ENCODE measurements at regions of chr16 and their contacts with region 1.

Region 1: DNA sequence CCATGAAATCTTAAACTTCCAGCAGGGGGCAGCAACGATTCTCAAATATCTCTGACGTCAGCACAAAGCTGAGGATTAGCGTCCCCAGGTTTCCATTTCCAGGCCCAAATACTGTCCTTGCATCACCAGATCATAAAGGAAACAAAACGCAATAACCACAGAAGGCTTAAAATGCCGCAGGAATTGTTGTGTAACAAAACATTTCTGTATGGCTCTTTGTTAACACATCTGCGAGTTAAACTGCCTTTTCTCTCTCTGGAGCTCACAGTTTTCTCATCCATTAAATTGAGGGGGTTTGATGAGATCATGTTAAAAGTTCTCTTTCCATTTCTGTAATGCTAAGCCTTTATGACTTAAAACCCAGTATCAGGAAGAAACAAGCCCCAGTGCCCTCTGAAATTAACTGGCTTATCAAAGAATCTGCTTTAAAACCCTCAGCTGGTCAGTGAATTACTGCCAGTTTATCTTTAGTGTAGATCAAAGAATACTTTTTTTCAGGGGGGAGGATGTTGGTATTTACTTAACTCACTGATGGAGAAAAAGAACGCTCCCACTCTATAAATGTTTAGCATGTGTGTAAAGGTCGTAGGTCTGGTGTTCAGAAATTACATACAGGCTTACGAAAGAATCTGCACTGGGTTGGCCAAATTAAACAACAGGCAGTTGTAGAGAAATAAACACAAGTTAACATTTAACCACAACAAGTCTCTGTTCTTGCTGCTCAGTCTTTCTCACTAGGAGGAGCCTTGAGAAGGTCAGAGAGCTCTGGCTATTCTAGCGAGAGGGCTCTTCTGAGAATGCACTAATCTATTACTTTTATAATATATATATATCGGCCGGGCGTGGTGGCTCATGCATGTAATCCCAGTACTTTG is 10.6 kb upstream of the TERF2 start:
- DNase-seq: peak; percentile 62
- ATAC-seq: peak; percentile 45 to 53

Region 2: GRCh38 chr16:69482410-69482991 is 86.1 kb after region 1 on chr16:
- intact Hi-C with region 1: loop called in 1 of 2 experiments (anchors 10 kb)
- DNase-seq: peak; percentile 87
- ATAC-seq: peak; percentile 80 to 85

Region 3: GRCh38 chr16:69651217-69651616 is 254.8 kb after region 1 on chr16:
- intact Hi-C with region 1: loop called in 1 of 2 experiments (anchors 10 kb)
- DNase-seq: no peak
- ATAC-seq: no peak

Region 4: DNA sequence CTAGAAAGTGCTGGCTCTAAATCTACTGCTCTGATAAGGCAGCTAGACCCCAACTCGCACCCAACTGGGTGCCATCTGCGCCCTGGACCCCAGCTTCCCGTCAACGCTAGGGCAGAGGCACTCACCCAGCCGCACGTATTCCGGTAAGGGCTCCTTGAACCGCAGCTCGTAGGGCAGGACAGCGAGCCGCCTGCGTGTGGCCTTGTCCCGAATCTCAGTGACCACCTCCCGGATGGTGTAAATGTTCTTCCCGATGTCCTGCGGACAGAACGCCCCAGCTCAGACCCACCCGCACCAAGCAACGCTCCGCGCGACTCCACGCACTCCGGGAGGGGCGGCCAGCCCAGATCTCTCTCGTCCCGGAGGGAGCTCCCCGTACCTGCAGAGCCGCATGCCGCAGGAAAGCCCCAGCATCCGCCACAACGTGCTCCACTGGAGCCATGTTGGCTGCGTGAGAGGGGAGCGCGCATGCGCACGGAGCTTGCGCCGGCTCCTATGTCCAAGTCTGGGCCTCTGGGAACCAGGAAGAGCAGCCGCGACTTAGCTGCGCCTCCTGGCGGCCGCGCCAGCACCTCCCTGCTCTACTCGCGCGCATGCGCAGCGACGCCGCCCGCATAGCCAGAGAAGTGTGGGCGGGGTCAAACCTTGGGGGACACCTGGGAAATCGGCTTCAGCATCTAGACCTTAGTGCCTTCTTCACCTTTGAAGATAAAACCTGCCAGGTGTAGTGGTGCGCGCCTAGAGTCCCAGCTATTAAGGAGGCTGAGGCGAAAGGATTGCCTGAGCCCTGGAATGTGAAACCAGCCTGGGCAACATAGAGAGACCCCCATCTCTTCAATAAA is 358.3 kb after region 1 on chr16 and contains the start of gene NOB1:
- intact Hi-C with region 1: loop called in 1 of 2 experiments (anchors 5 kb)
- DNase-seq: peak; percentile 97
- ATAC-seq: peak; percentile 98 to 99
- total RNA-seq, gene NOB1: 16.5 to 22.8 TPM